ENCODE measurements at regions of chr19 and their contacts with region 1.

Region 1: GRCh38 chr19:35055715-35056179 is 14.2 kb downstream of the HPN start:
- DNase-seq: peak in 1 of 2 experiments; percentile 51
- H3K4me3 ChIP-seq: no peak overlapping the region
- H3K27ac ChIP-seq: no peak overlapping the region
- H3K4me1 ChIP-seq: peaks cover 10% of the 10 kb centered on the region
- H3K27me3 ChIP-seq: no peaks in the 10 kb centered on the region
- CTCF ChIP-seq: peak; percentile 68

Region 2: DNA sequence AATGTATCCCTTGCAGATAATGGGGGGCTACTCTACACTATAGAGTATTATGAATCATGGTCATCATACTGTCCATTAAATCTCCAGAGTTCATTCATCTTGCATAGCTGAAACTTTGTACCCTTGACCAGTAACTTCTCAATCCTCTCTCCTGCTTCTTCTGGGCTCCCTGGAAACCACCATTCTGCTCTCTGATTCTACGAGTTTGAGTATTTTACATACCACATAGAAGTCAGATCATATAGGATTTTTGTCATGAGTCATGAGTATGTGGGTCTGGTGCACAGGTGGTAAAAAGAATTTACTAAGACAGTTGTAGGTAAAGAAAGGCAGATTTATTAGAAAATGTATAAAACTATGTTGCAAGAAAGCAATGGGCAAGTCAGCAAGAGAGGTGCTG is 532.3 kb before region 1 on chr19:
- CTCF ChIA-PET with region 1: no interaction called
- POLR2A ChIA-PET with region 1: interaction called, 14 read pairs
- intact Hi-C with region 1: no loop called
- DNase-seq: no peak
- H3K4me3 ChIP-seq: no peak overlapping the region
- H3K27ac ChIP-seq: no peak overlapping the region
- H3K4me1 ChIP-seq: no peaks in the 10 kb centered on the region
- H3K27me3 ChIP-seq: peaks cover 27% of the 10 kb centered on the region
- CTCF ChIP-seq: no peak

Region 3: DNA sequence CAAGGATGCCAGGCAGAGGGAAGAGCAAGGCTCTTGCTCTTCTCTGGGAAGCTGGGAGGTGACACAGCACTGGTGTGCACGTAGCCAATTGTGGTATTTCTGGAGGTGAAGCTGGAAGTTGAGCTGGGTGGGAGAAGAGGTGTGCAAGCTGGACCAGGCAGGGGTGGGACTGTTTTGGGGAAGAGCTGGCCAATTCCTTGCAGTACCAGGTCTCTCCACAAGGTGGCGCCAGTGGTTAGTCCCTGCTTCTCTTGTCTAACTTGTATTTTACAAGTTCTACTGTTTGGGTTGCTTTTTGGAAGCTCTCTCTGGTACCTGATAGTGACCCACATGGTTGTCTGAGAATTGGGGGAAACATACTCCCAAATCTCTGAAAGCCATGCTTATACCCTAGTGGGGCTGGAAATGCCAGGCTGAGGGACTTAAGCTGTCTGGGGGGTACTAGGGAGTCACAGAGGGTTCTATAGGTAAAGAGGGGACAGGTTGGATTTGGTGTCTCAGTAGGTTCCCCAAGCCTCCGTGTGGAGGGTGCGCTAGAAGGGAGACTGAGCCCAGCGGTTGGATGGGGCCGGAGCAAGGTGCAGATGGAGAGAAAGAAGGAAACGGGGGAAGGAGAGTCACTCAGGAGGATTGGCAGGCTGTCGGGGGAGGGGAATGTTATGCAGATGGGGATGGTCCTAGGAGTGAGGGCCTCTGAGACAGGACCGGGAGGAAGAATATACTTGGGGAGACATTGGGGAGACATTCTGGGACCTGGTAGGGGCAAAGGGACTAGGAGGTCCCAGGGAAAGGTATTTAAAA is 11.2 kb before region 1 on chr19:
- CTCF ChIA-PET with region 1: interaction called, 15 read pairs
- POLR2A ChIA-PET with region 1: no interaction called
- intact Hi-C with region 1: no loop called
- DNase-seq: peak in 1 of 2 experiments; percentile 66
- H3K4me3 ChIP-seq: no peak overlapping the region
- H3K27ac ChIP-seq: no peak overlapping the region
- H3K4me1 ChIP-seq: peaks cover 8% of the 10 kb centered on the region; the same call in 1 of the 2 replicates
- H3K27me3 ChIP-seq: no peaks in the 10 kb centered on the region
- CTCF ChIP-seq: peak; percentile 99

Measured in PC-9 (cell line).